Activated CD8-positive, alpha-beta T cell treated with anti-CD3 and anti-CD28 coated beads for 36 hours (primary cell): ENCODE measurements at regions of chr5 and their contacts with region 1.

Region 1: DNA sequence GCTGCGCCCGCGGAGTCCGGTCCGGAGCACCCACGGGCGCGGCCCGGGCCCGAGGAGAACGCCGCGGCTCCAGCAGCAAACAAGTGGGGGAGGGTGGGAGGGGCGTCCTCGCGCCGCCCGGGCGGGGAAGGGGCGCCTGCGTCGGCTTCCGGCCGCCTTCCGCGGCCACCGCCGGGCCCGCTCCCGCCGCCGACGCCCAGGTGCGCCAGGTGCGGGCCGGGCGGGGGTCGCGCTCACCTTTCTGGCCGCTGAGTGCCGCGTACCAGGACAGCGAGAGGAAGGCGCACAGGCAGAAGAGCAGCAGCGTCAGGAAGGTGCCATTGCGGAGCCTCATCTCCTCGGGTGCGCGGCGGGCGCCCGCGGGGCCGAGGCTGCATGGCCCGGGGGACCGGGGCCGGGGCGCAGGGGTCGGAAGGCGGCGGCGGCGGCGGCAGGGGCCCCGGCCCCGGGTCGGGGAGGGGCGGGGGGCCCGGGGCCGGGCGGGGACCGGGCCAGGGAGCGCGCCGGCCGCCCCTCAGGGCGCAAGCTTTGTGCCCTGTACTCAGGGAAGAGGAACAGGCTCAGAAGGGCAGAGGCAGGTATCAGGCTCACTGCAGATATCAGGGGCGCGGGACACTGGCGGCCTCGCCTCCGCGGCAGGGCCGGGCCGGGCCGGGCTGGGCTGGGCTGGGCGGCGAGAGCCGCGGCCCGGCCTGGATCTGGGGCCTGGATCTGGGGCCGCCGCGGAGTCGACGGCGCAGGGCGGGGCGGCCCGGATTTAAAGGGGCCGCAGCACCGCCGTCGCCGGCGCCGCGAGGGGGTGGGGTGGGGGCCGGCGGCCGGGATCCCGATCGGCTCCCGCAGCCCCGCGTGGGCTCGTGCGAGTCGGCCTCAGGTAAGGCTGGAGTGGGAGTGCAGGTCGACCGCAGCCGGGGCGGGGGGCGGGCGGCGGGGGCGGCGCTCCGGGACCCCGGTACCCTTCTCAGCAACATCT is at the start of gene MGAT4B:
- DNase-seq: peak; percentile 65
- ATAC-seq: peak; percentile 64
- H3K4me3 Mint-ChIP-seq: peak within 1 kb of the TSS; percentile 85
- H3K27ac Mint-ChIP-seq: peak within 1 kb of the TSS; percentile 72
- H3K4me1 Mint-ChIP-seq: peaks cover 27% of the 10 kb centered on the region
- H3K27me3 Mint-ChIP-seq: no peaks in the 10 kb centered on the region
- CTCF ChIP-seq: no peak
- total RNA-seq, gene MGAT4B: 62.8 to 65.9 TPM

Region 2: GRCh38 chr5:179755022-179755421 is 51.5 kb before region 1 on chr5:
- CTCF ChIA-PET with region 1: interaction called, 13 read pairs
- POLR2A ChIA-PET with region 1: no interaction called
- intact Hi-C with region 1: loop called (anchors 5 kb)
- DNase-seq: no peak
- ATAC-seq: no peak
- H3K4me3 Mint-ChIP-seq: no peak overlapping the region
- H3K27ac Mint-ChIP-seq: peak overlapping the region; percentile 47
- H3K4me1 Mint-ChIP-seq: peaks cover 45% of the 10 kb centered on the region
- H3K27me3 Mint-ChIP-seq: no peaks in the 10 kb centered on the region
- CTCF ChIP-seq: no peak

Region 3: DNA sequence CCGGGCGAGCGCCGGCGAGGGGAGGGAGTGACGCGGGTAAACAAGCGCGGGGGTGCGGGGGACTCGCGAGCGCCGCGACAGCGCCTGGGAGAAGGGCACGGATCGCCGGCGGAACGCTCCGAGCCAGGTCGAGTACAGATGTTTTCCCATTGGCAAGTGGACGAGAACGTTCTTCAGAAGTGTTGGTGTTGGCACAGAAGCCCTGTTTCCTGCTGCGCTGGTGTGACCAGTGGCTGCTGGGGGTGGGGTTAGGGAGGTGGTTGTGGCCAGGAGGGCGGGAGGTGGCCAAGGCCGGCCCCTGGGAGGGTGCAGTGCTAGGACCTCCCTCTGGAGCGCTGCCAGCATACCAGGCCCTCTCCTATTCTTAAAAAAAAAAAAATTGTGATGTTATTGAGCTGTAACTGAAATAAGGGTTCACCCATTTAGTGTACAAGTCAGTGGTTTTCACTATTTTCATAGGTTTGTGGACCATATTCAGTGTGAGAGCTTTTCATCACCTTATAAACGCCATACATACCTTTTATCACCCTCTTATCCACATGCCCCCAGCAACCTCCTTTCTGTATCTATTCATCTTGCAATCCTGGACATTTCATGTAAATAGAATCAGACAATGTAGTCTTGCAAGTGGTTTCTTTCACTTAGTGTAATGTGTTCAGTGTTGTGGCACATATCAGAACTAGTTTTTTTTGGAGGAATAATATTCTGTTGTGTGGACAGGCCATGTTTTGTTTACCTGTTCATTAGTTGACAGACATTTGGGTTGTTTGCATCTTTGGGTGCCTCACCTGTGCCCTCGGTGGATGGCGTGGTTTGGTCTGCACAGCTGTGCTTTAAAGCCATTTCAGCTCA is 15.3 kb after region 1 on chr5:
- CTCF ChIA-PET with region 1: interaction called, 9 read pairs
- POLR2A ChIA-PET with region 1: interaction called, 25 read pairs
- intact Hi-C with region 1: no loop called
- DNase-seq: peak; percentile 91
- ATAC-seq: peak; percentile 64
- H3K4me3 Mint-ChIP-seq: peak overlapping the region; percentile 94
- H3K27ac Mint-ChIP-seq: peak overlapping the region; percentile 94
- H3K4me1 Mint-ChIP-seq: peaks cover 45% of the 10 kb centered on the region
- H3K27me3 Mint-ChIP-seq: no peaks in the 10 kb centered on the region
- CTCF ChIP-seq: no peak

Region 4: DNA sequence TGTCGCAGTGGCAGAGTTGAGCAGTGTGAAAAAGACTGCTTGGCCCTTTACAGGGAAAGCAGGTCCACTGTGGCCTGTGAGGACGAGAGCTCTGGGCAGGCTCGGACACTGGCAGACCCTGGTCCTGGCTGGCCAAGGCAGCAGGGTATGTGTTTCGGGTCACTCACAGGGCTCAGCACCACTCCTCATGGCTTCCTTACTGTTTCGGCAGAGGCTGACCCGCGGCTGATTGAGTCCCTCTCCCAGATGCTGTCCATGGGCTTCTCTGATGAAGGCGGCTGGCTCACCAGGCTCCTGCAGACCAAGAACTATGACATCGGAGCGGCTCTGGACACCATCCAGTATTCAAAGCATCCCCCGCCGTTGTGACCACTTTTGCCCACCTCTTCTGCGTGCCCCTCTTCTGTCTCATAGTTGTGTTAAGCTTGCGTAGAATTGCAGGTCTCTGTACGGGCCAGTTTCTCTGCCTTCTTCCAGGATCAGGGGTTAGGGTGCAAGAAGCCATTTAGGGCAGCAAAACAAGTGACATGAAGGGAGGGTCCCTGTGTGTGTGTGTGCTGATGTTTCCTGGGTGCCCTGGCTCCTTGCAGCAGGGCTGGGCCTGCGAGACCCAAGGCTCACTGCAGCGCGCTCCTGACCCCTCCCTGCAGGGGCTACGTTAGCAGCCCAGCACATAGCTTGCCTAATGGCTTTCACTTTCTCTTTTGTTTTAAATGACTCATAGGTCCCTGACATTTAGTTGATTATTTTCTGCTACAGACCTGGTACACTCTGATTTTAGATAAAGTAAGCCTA is 29.9 kb after region 1 on chr5:
- CTCF ChIA-PET with region 1: interaction called, 11 read pairs
- POLR2A ChIA-PET with region 1: interaction called, 5 read pairs
- intact Hi-C with region 1: no loop called
- DNase-seq: peak; percentile 77
- ATAC-seq: peak; percentile 98
- H3K4me3 Mint-ChIP-seq: no peak overlapping the region
- H3K27ac Mint-ChIP-seq: peak overlapping the region; percentile 90
- H3K4me1 Mint-ChIP-seq: peaks cover 21% of the 10 kb centered on the region
- H3K27me3 Mint-ChIP-seq: no peaks in the 10 kb centered on the region
- CTCF ChIP-seq: no peak

Region 5: DNA sequence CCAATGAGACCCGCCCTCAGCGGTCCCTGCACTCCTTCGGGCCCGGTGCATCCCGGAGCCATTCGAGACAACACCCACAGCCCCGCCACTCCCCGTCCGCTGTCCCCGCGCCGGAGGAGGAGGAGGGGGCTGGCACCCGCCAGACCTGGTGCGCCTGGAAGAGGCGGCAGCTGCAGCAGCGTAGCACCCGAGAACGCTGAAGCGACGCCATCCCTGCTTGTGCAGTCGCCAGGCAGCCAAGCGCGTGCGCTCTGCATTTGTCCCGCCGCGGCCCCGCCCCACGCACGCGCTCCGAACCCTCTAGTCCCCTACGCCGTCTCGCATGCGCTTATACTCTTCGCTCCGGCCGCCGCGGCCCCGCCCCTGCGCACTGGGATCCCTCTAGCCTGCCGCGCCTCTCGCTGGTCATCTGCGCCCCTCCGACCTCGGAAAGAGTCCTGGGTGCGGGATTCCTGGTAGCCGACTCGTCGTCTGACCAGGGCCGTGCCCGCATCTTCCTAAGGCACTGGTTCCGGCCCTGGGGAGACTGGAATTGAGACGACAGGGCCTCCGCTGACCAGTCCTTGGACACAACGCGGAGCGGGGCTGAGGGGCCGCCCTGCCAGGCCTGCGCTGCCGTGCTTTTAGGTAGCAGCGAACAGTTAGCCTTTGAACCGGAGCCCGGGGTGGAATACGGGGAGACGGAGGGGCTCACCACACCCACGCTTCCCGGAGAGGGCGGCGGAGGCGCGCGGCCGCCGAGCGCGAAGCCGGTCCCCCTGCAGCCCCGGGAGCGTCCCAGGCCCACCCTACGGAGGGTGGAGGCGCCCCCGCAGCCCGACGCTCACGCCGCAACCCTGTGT is 52.3 kb after region 1 on chr5 and contains the start of gene MRNIP:
- CTCF ChIA-PET with region 1: interaction called, 5 read pairs
- POLR2A ChIA-PET with region 1: interaction called, 6 read pairs
- intact Hi-C with region 1: loop called (anchors 5 kb)
- DNase-seq: peak; percentile 95
- ATAC-seq: peak; percentile 96
- H3K4me3 Mint-ChIP-seq: peak within 1 kb of the TSS; percentile 85
- H3K27ac Mint-ChIP-seq: peak within 1 kb of the TSS; percentile 89
- H3K4me1 Mint-ChIP-seq: peaks cover 17% of the 10 kb centered on the region
- H3K27me3 Mint-ChIP-seq: no peaks in the 10 kb centered on the region
- CTCF ChIP-seq: no peak
- total RNA-seq, gene MRNIP: 19.8 to 21.5 TPM

Region 6: GRCh38 chr5:179907570-179908324 is 101.2 kb after region 1 on chr5 and contains the start of gene TBC1D9B:
- CTCF ChIA-PET with region 1: interaction called, 13 read pairs
- POLR2A ChIA-PET with region 1: interaction called, 3 read pairs
- intact Hi-C with region 1: loop called (anchors 2 kb)
- DNase-seq: peak; percentile 57
- ATAC-seq: peak; percentile 94
- H3K4me3 Mint-ChIP-seq: peak within 1 kb of the TSS; percentile 90
- H3K27ac Mint-ChIP-seq: peak within 1 kb of the TSS; percentile 82
- H3K4me1 Mint-ChIP-seq: peaks cover 14% of the 10 kb centered on the region
- H3K27me3 Mint-ChIP-seq: no peaks in the 10 kb centered on the region
- CTCF ChIP-seq: peak; percentile 32
- total RNA-seq, gene TBC1D9B: 92.4 to 94.6 TPM

Region 7: GRCh38 chr5:179923436-179923835 is 116.9 kb after region 1 on chr5:
- CTCF ChIA-PET with region 1: no interaction called
- POLR2A ChIA-PET with region 1: no interaction called
- intact Hi-C with region 1: no loop called
- DNase-seq: no peak
- ATAC-seq: no peak
- H3K4me3 Mint-ChIP-seq: no peak overlapping the region
- H3K27ac Mint-ChIP-seq: no peak overlapping the region
- H3K4me1 Mint-ChIP-seq: no peaks in the 10 kb centered on the region
- H3K27me3 Mint-ChIP-seq: peaks cover 2% of the 10 kb centered on the region
- CTCF ChIP-seq: no peak